OCI-LY7 (cell line): ENCODE measurements at regions of chr4 and their contacts with region 1.

Region 1: DNA sequence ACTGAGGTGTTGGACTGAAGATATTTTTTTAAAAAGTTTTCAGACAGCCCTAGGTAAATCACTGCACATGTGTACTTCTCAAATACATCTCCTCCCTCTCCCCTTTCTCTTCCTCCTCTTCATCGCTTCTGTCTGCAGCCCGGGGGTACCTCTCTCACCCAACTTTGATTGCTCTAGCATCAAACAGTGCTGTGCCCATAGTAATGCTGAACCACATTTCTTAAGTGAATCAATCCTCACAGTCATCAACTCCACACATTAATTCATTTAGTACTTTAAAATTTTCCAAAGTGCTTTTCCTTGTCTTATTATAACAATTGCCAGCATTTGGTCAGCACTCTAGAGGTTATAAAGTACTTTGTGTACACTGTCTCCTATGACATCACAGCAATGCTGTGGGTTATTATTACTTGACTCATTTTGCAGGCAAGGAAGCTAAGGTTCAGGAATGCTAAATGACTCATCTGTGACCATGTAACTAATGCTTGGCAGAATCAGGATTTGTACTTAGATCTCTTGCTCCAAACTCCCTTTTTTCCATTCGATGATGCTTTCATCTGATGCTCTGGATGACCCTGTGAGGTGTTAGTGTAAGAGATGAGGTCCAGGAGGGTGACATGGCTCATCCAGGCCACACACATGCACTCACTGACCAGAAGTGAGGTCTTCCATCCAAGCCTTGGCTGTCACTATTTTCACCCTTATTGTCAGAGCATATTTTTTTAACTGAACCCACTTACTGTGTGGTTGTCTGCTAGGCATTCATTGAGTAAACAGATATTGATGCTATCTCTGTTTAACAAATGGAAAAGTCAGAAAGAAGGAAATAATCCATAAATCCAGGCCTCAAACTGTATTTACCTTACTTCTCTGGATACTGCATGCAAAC is 58.8 kb downstream of the RHOH start:
- DNase-seq: no peak
- H3K4me3 ChIP-seq: no peak overlapping the region
- H3K27ac ChIP-seq: no peak overlapping the region
- H3K4me1 ChIP-seq: no peaks in the 10 kb centered on the region
- CTCF ChIP-seq: no peak

Region 2: GRCh38 chr4:40144716-40145115 is 110.9 kb before region 1 on chr4:
- CTCF ChIA-PET with region 1: no interaction called
- POLR2A ChIA-PET with region 1: interaction called, 10 read pairs
- intact Hi-C with region 1: no loop called
- DNase-seq: no peak
- H3K4me3 ChIP-seq: no peak overlapping the region
- H3K27ac ChIP-seq: no peak overlapping the region
- H3K4me1 ChIP-seq: no peaks in the 10 kb centered on the region
- CTCF ChIP-seq: no peak

Region 3: GRCh38 chr4:40434126-40434692 is 178.6 kb after region 1 on chr4:
- CTCF ChIA-PET with region 1: no interaction called
- POLR2A ChIA-PET with region 1: no interaction called
- intact Hi-C with region 1: no loop called
- DNase-seq: no peak
- H3K4me3 ChIP-seq: no peak overlapping the region
- H3K27ac ChIP-seq: no peak overlapping the region
- H3K4me1 ChIP-seq: no peaks in the 10 kb centered on the region
- CTCF ChIP-seq: no peak